ENCODE measurements at regions of chr6 and their contacts with region 1.

Region 1: GRCh38 chr6:21731411-21732031 is 138.0 kb downstream of the SOX4 start:
- DNase-seq: no peak
- H3K4me3 ChIP-seq: no peak overlapping the region
- H3K27ac ChIP-seq: no peak overlapping the region
- H3K4me1 ChIP-seq: peaks cover 0 to 13% of the 10 kb centered on the region in 2 donors
- H3K27me3 ChIP-seq: no peaks in the 10 kb centered on the region
- CTCF ChIP-seq: no peak

Region 2: DNA sequence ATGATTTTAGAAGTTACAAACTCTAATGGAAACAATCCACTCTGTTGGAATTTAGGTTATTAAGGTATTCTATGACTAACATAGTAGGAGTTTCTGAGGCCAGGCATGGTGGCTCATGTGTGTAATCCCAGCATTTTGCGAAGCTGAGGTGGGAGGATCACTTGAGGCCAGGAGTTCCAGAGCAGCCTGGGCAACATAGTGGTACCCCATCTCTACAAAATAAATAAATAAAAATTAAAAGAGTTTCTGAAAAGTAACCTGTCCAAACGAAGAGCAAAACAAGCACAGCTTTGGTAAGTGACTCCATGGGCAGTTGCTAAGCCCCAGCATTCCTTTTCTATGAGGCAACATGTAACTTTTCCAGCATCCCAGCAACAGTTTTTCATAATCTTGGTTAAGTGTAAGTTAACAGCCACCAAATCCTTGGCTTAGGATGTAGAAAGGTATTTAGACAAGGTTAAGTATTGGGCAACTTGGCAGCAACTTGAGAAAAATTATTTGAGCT is 51.7 kb before region 1 on chr6:
- intact Hi-C with region 1: loop called (anchors 5 kb)
- DNase-seq: no peak
- H3K4me3 ChIP-seq: no peak overlapping the region
- H3K27ac ChIP-seq: peak overlapping the region; percentile 66 to 83
- H3K4me1 ChIP-seq: peaks cover 0 to 6% of the 10 kb centered on the region in 2 donors
- H3K27me3 ChIP-seq: no peaks in the 10 kb centered on the region
- CTCF ChIP-seq: no peak